ENCODE measurements at regions of chr7 and their contacts with region 1.

Region 1: DNA sequence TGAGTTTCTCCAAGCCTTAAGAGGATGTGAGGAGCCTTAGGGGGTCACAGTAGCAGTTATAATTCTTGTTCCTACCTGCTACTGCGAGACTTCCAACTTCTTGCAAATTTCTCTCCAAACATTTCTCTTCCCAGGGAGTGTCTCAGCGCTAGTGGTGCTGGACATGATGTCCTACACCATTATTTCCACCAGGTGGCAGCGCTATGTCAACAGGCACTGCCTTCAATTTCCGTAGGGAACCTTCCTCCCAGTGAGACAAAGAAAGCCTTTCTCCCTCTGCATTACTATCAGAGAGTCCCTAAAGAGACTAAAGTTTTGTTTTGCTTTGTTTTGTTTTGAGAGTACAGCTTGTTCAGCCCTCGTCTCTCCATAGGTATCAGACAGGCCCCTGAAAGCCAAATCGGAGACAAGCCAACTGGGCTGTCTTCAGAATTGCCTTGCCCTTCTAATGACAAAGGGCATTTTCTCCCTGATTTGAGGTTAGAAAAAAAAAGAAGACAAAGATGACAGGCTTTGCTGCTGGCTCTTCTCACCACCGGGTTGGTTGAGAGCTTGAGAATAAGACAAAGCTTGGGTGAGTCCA is 44.2 kb upstream of the GGCT start:
- DNase-seq: peak; percentile 56
- CTCF ChIP-seq: peak; percentile 62

Region 2: DNA sequence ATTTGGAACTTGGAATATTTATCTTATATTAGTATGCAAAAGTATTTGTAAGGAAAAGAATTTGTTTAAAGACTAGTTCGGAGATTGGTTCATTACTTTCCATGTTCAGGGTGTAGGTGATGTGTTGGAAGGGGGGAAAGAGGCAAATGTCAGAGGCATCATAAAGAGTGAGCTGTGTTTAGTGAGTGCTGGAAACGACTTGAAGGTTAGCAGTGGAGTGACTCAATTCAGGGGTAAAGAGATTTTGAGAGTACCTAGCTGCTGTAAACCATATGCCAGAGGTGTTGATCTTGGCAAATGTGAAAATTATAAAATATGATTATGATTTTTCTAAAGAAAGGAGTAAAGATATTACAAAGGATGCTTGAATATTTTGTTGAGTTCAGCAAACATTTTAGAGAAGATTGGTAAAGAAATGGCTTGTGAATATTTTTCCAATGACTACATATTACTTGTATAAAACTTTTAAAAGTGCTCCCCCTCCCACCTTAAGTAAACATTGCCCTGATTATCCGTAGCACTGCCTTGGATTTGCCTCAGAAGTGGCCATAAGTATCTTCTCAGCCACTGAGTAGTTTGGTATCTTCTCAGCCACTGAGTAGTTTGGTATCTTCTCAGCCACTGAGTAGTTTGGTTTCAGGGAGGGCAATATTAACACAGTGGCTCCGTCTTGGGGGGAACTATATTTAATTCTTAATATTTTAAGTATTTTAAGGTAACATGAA is 212.9 kb before region 1 on chr7:
- CTCF ChIA-PET with region 1: no interaction called
- POLR2A ChIA-PET with region 1: no interaction called
- DNase-seq: no peak
- CTCF ChIP-seq: no peak

Region 3: GRCh38 chr7:30533886-30534285 is 15.0 kb before region 1 on chr7:
- CTCF ChIA-PET with region 1: interaction called, 22 read pairs
- POLR2A ChIA-PET with region 1: no interaction called
- DNase-seq: no peak
- CTCF ChIP-seq: no peak